Right ventricle myocardium superior (tissue), 1 donor: ENCODE measurements at regions of chr10 and their contacts with region 1.

Region 1: DNA sequence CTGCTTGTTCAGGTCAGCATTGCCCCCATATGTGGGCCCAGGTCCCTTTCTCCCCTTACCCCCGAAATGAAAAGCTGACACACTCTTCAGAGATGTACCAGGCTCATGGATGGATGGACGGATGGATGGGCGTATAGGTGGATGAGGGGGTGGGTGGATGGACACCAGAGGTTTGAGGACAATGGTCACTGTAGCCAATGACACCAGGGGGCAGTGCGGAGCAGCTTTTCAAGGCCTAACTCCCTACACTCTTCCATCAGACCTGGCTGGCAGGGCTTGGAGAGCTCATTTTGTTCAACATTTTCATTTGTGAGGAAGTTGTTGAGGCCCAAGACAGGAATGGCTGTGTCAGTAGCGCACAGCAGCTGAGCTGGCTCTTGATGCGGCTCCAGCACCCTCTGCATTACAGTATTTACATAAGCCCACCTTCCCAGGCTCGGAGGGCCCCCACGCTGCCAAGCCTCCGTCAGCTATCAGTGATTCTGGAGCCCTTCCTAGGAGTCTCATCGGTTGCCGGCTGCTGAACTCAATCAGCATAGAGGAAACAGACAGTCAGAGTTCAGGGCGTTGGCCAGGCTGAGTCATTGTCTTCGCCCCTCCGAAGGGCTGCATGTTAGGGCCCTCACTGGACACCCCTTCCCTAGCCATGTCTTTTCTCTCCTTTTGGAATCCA is 11.6 kb upstream of the FFAR4 start:
- DNase-seq: peak; percentile 82
- ATAC-seq: peak; percentile 93

Region 2: DNA sequence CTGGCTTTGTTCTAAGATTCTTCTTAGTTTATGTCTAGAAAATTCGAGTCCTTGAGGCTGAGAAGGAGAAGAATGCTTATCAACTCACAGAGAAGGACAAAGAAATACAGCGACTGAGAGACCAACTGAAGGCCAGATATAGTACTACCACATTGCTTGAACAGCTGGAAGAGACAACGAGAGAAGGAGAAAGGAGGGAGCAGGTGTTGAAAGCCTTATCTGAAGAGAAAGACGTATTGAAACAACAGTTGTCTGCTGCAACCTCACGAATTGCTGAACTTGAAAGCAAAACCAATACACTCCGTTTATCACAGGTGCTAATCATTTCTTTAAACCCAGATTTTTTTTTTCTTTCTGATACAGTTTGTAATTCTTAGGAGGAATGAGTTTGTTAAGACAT is 51.8 kb before region 1 on chr10:
- intact Hi-C with region 1: no loop called
- DNase-seq: no peak
- ATAC-seq: no peak

Region 3: GRCh38 chr10:93604146-93604545 is 49.2 kb after region 1 on chr10:
- intact Hi-C with region 1: no loop called
- DNase-seq: no peak
- ATAC-seq: no peak

Region 4: GRCh38 chr10:93680412-93681047 is 125.6 kb after region 1 on chr10:
- intact Hi-C with region 1: loop called (anchors 10 kb)
- DNase-seq: no peak
- ATAC-seq: peak; percentile 72